PC-9 (cell line): ENCODE measurements at regions of chr7 and their contacts with region 1.

Region 1: GRCh38 chr7:17746020-17746530 is 194.2 kb downstream of the SNX13 start:
- DNase-seq: no peak
- H3K4me3 ChIP-seq: no peak overlapping the region
- H3K27ac ChIP-seq: no peak overlapping the region
- H3K4me1 ChIP-seq: no peaks in the 10 kb centered on the region
- H3K27me3 ChIP-seq: no peaks in the 10 kb centered on the region
- CTCF ChIP-seq: no peak

Region 2: DNA sequence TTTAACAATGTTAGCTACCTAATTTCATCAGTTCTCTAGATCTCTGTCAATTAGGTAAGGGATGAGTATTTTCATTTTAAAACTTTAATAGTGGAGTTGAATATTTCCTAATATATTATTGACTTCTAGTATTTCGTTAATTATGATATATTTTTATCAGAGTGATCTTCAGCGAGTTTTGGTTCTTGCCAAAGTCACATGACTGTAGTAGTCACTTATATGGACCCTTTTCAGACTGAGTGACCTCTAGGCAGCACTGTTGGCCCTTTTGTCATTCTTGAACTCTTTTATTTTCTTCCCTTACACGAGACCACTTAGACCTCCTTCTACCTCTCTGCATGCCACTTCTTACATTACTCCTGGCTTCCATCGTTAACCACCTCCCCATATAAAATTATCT is 1069.5 kb before region 1 on chr7:
- CTCF ChIA-PET with region 1: no interaction called
- POLR2A ChIA-PET with region 1: interaction called, 18 read pairs
- intact Hi-C with region 1: no loop called
- DNase-seq: no peak
- H3K4me3 ChIP-seq: no peak overlapping the region
- H3K27ac ChIP-seq: no peak overlapping the region
- H3K4me1 ChIP-seq: peaks cover 14% of the 10 kb centered on the region; the same call in 1 of the 2 replicates
- H3K27me3 ChIP-seq: no peaks in the 10 kb centered on the region
- CTCF ChIP-seq: no peak

Region 3: GRCh38 chr7:16826070-16826750 is 919.9 kb before region 1 on chr7:
- CTCF ChIA-PET with region 1: no interaction called
- POLR2A ChIA-PET with region 1: no interaction called
- intact Hi-C with region 1: no loop called
- DNase-seq: no peak
- H3K4me3 ChIP-seq: no peak overlapping the region
- H3K27ac ChIP-seq: no peak overlapping the region
- H3K4me1 ChIP-seq: no peaks in the 10 kb centered on the region
- H3K27me3 ChIP-seq: no peaks in the 10 kb centered on the region
- CTCF ChIP-seq: no peak

Region 4: DNA sequence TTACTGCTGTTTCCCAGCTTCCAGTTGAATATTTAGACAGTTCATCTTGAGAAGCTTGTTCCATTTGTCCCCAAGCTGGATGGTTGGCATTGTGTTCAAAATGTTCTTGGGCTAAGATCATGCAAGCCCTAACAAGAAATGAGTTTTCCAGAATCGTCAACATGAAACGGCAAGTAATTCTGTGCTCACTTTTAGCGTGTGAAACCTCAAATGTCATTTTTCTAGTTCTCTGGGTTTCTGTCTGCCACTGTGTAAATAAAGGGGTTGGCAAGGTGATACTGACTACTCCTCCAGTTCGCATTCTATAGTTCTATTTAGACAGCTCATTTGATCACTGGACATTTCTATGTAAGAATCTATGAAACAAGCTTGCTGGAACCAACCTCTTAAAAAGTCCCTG is 253.6 kb before region 1 on chr7:
- CTCF ChIA-PET with region 1: no interaction called
- POLR2A ChIA-PET with region 1: no interaction called
- intact Hi-C with region 1: no loop called
- DNase-seq: no peak
- H3K4me3 ChIP-seq: no peak overlapping the region
- H3K27ac ChIP-seq: no peak overlapping the region
- H3K4me1 ChIP-seq: peaks cover 8% of the 10 kb centered on the region; the same call in 1 of the 2 replicates
- H3K27me3 ChIP-seq: no peaks in the 10 kb centered on the region
- CTCF ChIP-seq: no peak

Region 5: DNA sequence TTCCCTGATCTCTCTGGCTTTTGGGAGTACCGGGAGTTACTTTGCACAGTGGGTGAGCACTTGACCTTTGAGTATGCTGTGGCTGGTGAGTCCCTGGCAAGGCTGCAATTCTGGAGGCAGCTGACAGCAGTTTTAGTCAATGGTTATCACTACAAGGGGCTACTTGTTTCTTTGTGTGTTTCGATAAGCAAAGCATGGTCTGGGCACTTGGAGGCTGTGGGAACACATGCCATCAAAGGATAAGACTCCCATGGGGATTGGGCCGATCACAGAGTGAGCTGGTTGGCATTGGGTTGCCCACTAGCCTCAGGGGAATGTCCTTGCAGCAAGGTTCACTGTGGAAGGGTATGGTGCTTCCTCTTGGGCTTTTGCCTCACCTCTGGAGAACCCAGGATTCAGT is 14.0 kb before region 1 on chr7:
- CTCF ChIA-PET with region 1: no interaction called
- POLR2A ChIA-PET with region 1: no interaction called
- intact Hi-C with region 1: no loop called
- DNase-seq: no peak
- H3K4me3 ChIP-seq: no peak overlapping the region
- H3K27ac ChIP-seq: no peak overlapping the region
- H3K4me1 ChIP-seq: no peaks in the 10 kb centered on the region
- H3K27me3 ChIP-seq: peaks cover 5% of the 10 kb centered on the region; the same call in 1 of the 2 replicates
- CTCF ChIP-seq: no peak

Region 6: DNA sequence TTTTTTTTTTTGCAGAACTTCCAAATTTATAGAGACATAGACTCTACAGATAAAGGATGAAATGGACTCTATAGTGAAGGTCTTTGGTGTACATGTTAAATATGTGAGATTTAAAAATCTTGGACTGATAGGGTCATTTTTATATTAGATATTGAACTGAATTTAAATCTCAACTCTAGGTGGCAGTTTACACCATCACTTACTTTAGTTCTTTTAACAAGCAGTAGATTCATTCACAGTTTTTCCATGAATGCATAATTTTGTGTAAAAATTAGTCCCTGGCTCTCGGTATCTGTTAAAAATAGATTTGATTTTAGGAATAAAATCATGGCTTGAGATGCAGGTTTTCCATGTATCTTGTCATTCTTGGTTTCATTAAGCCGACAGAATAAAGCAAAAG is 225.3 kb after region 1 on chr7:
- CTCF ChIA-PET with region 1: no interaction called
- POLR2A ChIA-PET with region 1: no interaction called
- intact Hi-C with region 1: no loop called
- DNase-seq: peak in 1 of 2 experiments; percentile 31
- H3K4me3 ChIP-seq: no peak overlapping the region
- H3K27ac ChIP-seq: no peak overlapping the region
- H3K4me1 ChIP-seq: no peaks in the 10 kb centered on the region
- H3K27me3 ChIP-seq: no peaks in the 10 kb centered on the region
- CTCF ChIP-seq: peak; percentile 58